Head of caudate nucleus (tissue), 42 donors: ENCODE measurements at regions of chr4 and their contacts with region 1.

Region 1: GRCh38 chr4:41525129-41525528 is 12.8 kb upstream of the LIMCH1 start:
- DNase-seq: no peak

Region 2: DNA sequence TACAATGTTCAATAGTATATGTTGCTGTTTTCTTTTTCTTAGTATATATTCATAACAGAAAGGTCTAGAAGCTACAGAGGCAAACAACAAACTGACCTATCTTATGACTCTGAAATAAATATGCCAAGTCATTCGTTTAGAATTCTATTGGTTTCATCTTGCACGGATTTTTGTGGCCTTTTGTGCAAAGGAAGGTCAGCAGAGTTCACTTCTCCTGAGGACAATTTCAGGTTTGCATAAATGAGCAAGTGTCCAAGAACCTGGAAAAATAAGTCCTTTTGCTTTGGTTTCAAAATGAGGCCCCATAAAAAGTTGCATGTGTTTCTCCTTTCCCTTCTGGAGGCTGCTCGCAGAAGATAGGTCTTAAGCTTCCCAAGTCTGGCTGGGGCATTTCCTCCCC is 467.7 kb before region 1 on chr4:
- intact Hi-C with region 1: no loop called
- DNase-seq: no peak

Region 3: DNA sequence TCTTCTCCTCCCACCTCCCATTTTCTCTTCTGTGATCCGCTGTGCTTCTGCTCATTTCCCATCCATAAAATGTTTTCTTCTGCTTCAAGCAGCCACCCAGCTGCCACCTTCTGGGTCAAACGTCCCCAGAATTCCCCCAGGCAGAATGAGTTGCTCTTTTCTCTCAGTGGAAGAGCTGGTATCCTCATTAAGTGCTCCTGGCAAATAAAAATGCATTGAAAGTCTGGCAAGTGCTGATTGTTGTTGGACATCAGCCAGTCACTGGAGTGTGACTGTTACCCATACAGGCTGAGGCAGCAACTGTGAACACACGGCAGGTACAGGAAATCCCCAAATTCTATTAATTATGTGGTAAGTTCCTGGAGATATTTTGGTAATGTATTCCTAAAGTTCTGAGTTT is 65.5 kb after region 1 on chr4:
- intact Hi-C with region 1: loop called (anchors 10 kb)
- DNase-seq: no peak